ENCODE measurements at regions of chr4 and their contacts with region 1.

Region 1: DNA sequence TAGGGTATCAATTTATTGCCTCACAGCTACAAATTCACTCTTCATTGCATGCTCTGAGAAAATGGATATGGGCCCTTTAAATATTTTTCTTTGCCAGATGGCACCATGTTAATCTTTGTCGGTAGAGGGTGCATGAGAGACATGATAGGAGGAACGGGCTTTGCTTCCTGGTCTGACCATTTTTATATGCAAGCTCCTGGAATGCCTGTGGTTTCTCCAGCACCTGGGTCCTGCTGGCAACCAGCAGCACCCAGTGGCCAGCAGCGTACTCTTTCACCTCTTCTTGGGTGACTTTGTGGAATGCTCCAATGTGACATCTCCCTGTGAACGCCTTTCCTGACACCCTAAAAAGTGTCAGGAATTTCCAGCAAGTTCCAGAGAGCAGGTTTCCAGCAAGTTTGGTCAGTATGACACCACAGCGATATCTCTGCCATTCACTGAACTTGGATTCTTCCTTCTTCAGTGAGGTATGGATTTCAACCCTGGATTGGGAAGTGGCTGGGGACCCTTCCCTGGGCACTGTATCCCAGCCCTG is 140.3 kb upstream of the PGRMC2 start:
- DNase-seq: peak; percentile 80 to 89
- H3K4me3 ChIP-seq: no peak overlapping the region
- H3K27ac ChIP-seq: no peak overlapping the region
- H3K4me1 ChIP-seq: peaks cover 10% of the 10 kb centered on the region; the same call in 1 of the 2 replicates
- H3K27me3 ChIP-seq: no peaks in the 10 kb centered on the region
- CTCF ChIP-seq: peak; percentile 72

Region 2: GRCh38 chr4:128191115-128191781 is 236.7 kb before region 1 on chr4:
- CTCF ChIA-PET with region 1: interaction called, 3 read pairs
- POLR2A ChIA-PET with region 1: no interaction called
- intact Hi-C with region 1: loop called (anchors 1 kb)
- DNase-seq: peak; percentile 45 to 55
- H3K4me3 ChIP-seq: no peak overlapping the region
- H3K27ac ChIP-seq: no peak overlapping the region
- H3K4me1 ChIP-seq: no peaks in the 10 kb centered on the region
- H3K27me3 ChIP-seq: no peaks in the 10 kb centered on the region
- CTCF ChIP-seq: peak; percentile 89

Region 3: GRCh38 chr4:128354205-128354821 is 73.6 kb before region 1 on chr4:
- CTCF ChIA-PET with region 1: no interaction called
- POLR2A ChIA-PET with region 1: no interaction called
- intact Hi-C with region 1: loop called (anchors 1 kb)
- DNase-seq: peak; percentile 78 to 94
- H3K4me3 ChIP-seq: peak overlapping the region; percentile 19; the same call in 1 of the 2 replicates
- H3K27ac ChIP-seq: peak overlapping the region; percentile 90
- H3K4me1 ChIP-seq: peaks cover 43% of the 10 kb centered on the region
- H3K27me3 ChIP-seq: no peaks in the 10 kb centered on the region
- CTCF ChIP-seq: no peak

Region 4: DNA sequence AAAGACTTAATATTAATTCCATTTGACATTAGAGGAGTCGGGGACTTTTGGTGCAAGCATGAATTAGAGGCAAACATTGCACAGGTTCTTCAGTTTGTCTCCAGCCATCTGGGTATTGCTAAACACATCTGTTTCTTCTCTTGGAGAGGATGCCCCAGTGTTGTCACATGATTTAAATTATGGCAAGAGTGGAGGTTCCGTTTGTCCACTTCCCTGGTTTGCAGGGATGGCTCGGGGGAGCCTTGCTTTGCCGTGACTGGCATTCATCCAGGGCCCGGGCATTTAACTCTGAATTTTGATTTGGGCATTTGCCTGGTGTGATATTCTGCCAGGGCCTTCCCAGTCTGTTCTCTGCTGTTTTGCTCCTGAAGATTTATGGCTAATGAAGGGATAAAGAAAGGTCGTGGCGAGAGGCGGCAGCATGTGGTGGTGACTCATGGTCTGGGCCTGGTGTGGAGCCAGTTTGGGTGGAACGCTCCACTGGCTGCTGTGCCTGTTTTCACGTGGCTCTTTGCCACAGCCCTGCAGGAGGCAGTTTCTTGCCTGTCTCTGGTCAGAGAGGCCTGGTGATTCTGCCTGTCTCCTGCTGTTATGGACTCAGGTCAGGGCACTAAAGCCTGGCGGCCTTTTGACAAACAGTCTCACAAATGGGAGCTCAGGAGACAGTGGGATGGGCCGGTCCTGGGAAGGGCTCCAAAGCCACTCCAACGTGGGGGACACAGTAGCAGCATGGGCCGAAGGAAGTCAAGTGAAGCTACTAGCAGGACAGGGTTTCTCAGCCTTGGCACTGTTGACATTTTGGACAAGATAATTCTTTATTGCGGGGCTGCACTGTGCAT is 40.9 kb before region 1 on chr4:
- CTCF ChIA-PET with region 1: no interaction called
- POLR2A ChIA-PET with region 1: interaction called, 5 read pairs
- intact Hi-C with region 1: loop called (anchors 1 kb)
- DNase-seq: peak; percentile 77 to 87
- H3K4me3 ChIP-seq: no peak overlapping the region
- H3K27ac ChIP-seq: peak overlapping the region; percentile 63
- H3K4me1 ChIP-seq: peaks cover 33% of the 10 kb centered on the region
- H3K27me3 ChIP-seq: no peaks in the 10 kb centered on the region
- CTCF ChIP-seq: no peak

Region 5: GRCh38 chr4:129093191-129093920 is 665.5 kb after region 1 on chr4 and contains the start of gene SCLT1:
- CTCF ChIA-PET with region 1: no interaction called
- POLR2A ChIA-PET with region 1: no interaction called
- intact Hi-C with region 1: loop called (anchors 5 kb)
- DNase-seq: peak; percentile 90 to 97
- H3K4me3 ChIP-seq: peak within 1 kb of the TSS; percentile 77
- H3K27ac ChIP-seq: peak within 1 kb of the TSS; percentile 72
- H3K4me1 ChIP-seq: peaks cover 18% of the 10 kb centered on the region
- H3K27me3 ChIP-seq: no peaks in the 10 kb centered on the region
- CTCF ChIP-seq: no peak
- total RNA-seq, gene SCLT1: 15.9 and 16.9 TPM in 2 replicates

Measured in PC-9 (cell line).